ENCODE measurements at regions of chr13 and their contacts with region 1.

Region 1: DNA sequence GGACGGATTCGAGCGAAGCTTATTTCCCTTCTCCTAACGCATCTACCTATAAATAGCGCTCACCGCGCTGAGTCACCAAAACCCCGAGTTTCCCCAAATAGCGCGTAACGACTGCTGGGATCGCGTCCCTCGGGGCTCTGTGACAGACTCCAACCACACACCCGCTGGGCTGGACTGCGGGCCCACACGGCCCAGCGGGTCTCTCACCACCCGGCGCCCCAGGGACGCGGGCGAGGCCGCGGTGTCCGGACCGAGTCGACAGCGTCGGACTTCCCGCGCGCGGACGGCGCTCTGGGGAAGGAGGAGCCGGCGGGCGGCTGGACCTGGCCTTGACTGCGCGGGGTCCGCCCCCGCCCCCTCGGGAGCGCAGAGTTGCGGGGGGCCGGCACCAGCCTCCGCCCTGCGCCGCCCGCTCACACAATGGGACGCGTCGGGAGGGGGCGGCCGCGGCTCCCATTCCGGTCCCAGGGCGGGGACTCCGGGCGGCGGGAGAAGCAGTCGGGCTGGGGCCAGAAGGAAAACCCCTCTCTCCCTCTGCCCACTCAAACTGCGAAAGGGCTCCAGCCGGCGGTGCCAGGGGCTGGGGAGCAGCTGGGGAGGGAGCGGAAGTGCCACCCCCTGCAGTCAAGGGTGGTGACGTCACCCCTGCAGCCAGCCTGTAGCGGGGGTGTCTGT is 108.8 kb downstream of the KCNRG start:
- DNase-seq: no peak

Region 2: GRCh38 chr13:49329821-49330220 is 794.2 kb before region 1 on chr13:
- intact Hi-C with region 1: no loop called
- DNase-seq: no peak

Region 3: DNA sequence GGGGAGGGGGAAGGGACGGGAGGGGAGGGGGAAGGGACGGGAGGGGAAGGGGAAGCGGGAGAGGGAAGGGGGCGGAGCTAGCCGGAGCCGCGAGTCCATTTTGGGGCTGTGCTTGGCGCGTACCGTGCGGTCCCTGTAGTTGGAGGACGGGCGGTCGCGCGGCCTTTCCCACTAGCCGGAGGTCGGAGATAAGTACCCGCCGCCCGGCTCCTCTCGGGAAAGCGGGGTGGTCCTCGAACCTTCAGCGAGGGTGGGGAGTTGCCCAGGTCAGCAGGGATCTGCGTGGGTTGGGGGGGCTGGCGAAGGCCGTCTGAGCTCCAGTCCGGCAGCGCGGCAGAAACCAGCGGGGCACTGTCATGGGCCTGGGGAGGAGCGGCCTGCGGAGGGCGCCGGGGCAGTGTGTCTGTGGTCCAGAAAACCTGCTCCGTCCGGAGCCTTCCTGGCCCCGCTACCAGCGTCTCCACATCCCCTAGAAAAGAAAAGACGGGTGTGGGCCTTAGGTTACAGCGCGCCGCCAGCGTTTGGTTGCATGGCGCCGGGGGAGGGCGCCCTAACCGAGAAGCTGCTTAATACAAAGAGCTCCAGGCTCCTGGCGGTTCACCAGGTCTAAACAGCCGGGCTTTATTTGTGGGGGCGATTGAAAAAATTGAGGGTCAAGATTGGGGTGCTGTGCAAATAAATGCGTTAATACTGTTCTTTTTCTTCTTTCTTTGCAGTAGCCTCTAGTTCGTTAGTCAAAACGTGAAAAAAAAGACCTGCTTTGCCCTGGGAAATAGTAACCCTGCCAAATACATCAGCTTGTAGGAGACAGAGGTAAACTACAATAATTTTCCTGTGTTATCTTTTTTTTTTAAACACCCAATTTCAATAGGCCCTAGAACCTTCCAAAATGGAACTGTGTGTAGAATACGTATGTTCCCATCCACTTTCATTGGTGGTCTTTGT is 126.8 kb before region 1 on chr13 and contains the start of gene TRIM13:
- intact Hi-C with region 1: loop called in 1 of 2 experiments (anchors 5 kb)
- DNase-seq: peak; percentile 97
- total RNA-seq, gene TRIM13: 18.0 to 20.9 TPM

Region 4: GRCh38 chr13:51562011-51562671 is 1438.1 kb after region 1 on chr13:
- intact Hi-C with region 1: no loop called
- DNase-seq: no peak

Measured in posterior vena cava (tissue), 2 donors.